Activated naive CD4-positive, alpha-beta T cell treated with anti-CD3 and anti-CD28 coated beads for 36 hours (primary cell): ENCODE measurements at regions of chr14 and their contacts with region 1.

Region 1: GRCh38 chr14:23320774-23321571 is at the start of gene PABPN1:
- DNase-seq: peak; percentile 99
- H3K4me3 Mint-ChIP-seq: peak within 1 kb of the TSS; percentile 94
- H3K27ac Mint-ChIP-seq: peak within 1 kb of the TSS; percentile 96
- H3K4me1 Mint-ChIP-seq: peaks cover 18% of the 10 kb centered on the region
- H3K27me3 Mint-ChIP-seq: no peaks in the 10 kb centered on the region
- total RNA-seq, gene PABPN1: 194 to 204 TPM

Region 2: GRCh38 chr14:23034483-23035302 is 286.3 kb before region 1 on chr14 and contains the start of gene PSMB5:
- CTCF ChIA-PET with region 1: no interaction called
- intact Hi-C with region 1: loop called (anchors 1 kb)
- DNase-seq: peak; percentile 96
- H3K4me3 Mint-ChIP-seq: peak within 1 kb of the TSS; percentile 88
- H3K27ac Mint-ChIP-seq: peak within 1 kb of the TSS; percentile 96
- H3K4me1 Mint-ChIP-seq: peaks cover 34% of the 10 kb centered on the region
- H3K27me3 Mint-ChIP-seq: no peaks in the 10 kb centered on the region
- total RNA-seq, gene PSMB5: 120 to 125 TPM

Region 3: DNA sequence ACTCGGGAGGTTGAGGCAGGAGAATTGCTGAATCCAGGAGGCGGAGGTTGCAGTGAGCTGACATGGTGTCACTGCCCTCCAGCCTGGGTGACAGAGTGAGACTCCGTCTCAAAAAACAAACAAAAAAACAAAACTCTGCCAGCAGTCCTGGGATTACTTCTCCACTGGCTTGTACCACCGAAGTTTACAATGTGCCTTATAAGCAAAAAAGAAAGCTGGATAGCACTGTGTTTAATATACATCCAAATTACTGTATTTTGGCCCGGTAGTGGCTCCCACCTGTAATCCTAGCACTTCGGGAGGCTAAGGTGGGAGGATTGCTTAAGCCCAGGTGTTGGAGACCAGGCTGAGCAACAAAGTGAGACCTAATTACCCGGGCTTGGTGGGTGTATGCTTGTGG is 51.8 kb before region 1 on chr14:
- CTCF ChIA-PET with region 1: interaction called, 5 read pairs
- intact Hi-C with region 1: loop called (anchors 1 kb)
- DNase-seq: no peak
- H3K4me3 Mint-ChIP-seq: no peak overlapping the region
- H3K27ac Mint-ChIP-seq: no peak overlapping the region
- H3K4me1 Mint-ChIP-seq: no peaks in the 10 kb centered on the region
- H3K27me3 Mint-ChIP-seq: no peaks in the 10 kb centered on the region

Region 4: DNA sequence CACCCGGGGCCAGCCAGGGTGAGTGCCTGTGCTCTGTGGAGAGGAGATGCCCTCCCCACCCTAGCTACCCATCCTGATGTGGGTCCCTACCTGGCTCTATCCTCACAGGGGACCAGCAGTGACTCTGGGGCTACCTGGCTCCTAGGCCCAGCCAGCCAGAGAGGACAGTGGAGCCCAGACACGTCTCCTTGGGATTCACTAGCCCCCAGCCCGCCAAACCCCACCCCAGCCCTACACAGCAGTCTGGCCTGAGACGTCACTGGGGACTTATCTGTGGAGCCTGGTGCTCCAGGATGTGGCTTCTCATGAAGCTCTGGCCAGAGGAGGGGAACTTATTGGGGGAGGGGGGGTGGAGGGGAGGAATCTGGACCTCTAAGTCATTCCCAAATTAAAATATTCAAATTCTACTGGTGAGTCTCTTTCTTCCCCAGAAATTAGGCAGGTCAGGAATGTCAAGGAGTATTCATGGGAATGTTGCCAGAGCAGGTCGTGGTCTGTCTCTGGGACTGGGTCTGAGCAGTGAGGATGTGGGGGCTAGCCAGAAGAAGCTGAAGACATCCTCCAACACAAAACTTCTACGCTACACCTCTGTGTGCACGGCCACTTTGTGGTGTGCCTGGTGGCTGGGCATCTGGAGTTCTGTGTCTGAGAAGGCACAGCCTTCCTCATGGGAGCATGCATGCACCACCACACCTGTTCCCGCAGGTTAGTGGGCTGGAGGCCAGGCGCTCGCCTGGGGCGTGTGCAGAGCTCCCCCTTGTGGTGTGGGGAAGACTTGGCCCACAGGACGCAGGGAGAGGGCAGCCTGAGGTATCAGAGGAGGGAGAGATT is 58.6 kb after region 1 on chr14:
- CTCF ChIA-PET with region 1: interaction called, 76 read pairs
- intact Hi-C with region 1: no loop called
- DNase-seq: peak; percentile 66
- H3K4me3 Mint-ChIP-seq: no peak overlapping the region
- H3K27ac Mint-ChIP-seq: no peak overlapping the region
- H3K4me1 Mint-ChIP-seq: no peaks in the 10 kb centered on the region
- H3K27me3 Mint-ChIP-seq: no peaks in the 10 kb centered on the region

Region 5: DNA sequence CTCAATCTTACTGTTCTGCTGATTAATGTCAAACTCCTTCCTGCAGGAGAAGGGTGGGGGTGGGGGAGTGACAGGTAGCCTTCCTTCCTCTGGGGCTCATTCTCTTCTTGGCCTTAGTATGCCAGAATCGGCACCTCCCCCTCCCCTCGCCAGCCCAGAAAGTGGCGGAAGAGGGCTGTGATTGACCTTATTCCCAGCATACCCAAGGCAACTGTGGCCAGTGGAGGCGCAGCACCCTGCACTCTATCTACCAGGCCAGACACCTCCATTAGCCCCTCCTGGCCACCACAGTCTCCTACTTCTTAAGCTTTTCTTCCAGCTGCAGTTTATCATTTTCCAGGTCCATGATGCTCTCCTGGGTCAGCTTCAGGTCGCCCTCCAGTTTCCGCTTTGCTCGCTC is 71.6 kb after region 1 on chr14:
- CTCF ChIA-PET with region 1: no interaction called
- intact Hi-C with region 1: no loop called
- DNase-seq: no peak
- H3K4me3 Mint-ChIP-seq: no peak overlapping the region
- H3K27ac Mint-ChIP-seq: no peak overlapping the region
- H3K4me1 Mint-ChIP-seq: no peaks in the 10 kb centered on the region
- H3K27me3 Mint-ChIP-seq: no peaks in the 10 kb centered on the region

Region 6: GRCh38 chr14:23670481-23670880 is 349.5 kb after region 1 on chr14:
- CTCF ChIA-PET with region 1: no interaction called
- intact Hi-C with region 1: no loop called
- DNase-seq: no peak
- H3K4me3 Mint-ChIP-seq: no peak overlapping the region
- H3K27ac Mint-ChIP-seq: no peak overlapping the region
- H3K4me1 Mint-ChIP-seq: no peaks in the 10 kb centered on the region
- H3K27me3 Mint-ChIP-seq: no peaks in the 10 kb centered on the region

Region 7: GRCh38 chr14:24093901-24094761 is 773.2 kb after region 1 on chr14 and contains the start of gene PCK2:
- CTCF ChIA-PET with region 1: no interaction called
- intact Hi-C with region 1: loop called (anchors 1 kb)
- DNase-seq: peak; percentile 94
- H3K4me3 Mint-ChIP-seq: peak within 1 kb of the TSS; percentile 99
- H3K27ac Mint-ChIP-seq: peak within 1 kb of the TSS; percentile 98
- H3K4me1 Mint-ChIP-seq: peaks cover 32% of the 10 kb centered on the region
- H3K27me3 Mint-ChIP-seq: no peaks in the 10 kb centered on the region
- total RNA-seq, gene PCK2: 117 TPM

Region 8: DNA sequence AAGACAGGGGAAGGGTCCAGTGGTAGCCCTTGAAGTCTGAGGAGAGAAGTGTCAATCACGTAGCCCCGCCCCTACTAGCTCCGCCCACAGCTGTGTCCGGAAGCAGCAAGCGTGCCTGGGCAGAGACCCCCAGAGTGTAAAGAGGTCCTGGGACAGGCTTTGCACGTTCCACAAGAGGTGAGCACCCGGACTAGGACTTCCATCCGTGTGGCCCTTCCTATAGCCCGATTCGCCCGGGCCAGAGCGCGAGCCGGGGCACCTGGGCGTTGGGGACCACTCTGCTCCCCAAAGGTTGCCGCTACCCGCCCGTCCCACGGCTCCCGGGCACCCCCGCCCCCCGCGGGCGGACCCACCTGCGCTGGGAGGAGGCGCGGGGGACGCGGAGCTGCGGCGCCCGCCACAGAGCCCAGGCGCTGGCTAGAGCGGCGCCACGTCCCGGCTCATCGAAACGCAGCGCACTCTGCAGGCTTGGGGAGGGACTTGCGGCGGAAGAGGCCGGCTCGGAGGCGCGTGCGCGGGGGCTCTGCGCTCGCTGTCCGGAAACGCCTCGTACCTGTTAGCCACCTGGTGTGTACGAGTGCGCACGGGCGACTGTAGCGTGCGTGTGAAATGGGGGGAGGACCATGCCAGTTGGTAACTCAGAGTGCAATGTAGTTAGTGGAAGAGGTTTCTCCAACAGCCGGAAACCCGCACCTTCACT is 950.3 kb after region 1 on chr14 and contains the start of gene RABGGTA:
- CTCF ChIA-PET with region 1: no interaction called
- intact Hi-C with region 1: loop called (anchors 1 kb)
- DNase-seq: peak; percentile 94
- H3K4me3 Mint-ChIP-seq: peak within 1 kb of the TSS; percentile 78
- H3K27ac Mint-ChIP-seq: peak within 1 kb of the TSS; percentile 95
- H3K4me1 Mint-ChIP-seq: peaks cover 43% of the 10 kb centered on the region
- H3K27me3 Mint-ChIP-seq: no peaks in the 10 kb centered on the region
- total RNA-seq, gene RABGGTA: 74.9 to 76.2 TPM